Posterior vena cava (tissue), 2 donors: ENCODE measurements at regions of chr1 and their contacts with region 1.

Region 1: DNA sequence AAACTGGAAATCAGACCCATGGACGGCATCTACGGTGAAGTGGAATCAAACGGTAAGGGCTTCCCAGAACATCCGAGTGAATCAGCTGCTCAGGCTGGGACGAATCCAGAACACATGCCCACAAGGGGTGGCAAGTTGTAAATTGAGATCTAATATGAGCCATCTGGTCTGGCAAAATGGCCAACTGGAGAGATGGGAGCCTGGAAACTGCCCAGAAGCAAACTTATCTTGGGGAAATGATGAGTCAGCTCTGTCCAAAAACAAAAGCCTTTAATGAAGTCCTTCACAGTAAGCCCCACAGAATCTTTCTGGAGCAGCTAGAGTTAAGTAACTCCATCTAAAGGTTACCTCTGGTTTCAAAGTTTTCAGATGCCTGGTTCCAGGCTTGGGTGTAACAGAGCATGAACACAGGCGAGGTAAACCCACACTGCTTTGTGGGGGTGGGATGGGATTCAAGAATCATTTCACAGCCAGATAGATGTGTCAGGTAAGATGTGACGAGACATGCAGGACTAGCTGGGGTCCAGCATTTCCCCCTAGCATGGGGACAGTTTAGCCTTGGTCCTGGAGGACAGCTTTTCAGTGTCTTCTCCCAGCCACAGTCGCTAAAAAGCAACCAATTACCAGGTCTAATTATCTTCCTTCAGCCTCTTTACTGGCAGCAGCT is 10.5 kb upstream of the SRP9 start:
- DNase-seq: no peak

Region 2: DNA sequence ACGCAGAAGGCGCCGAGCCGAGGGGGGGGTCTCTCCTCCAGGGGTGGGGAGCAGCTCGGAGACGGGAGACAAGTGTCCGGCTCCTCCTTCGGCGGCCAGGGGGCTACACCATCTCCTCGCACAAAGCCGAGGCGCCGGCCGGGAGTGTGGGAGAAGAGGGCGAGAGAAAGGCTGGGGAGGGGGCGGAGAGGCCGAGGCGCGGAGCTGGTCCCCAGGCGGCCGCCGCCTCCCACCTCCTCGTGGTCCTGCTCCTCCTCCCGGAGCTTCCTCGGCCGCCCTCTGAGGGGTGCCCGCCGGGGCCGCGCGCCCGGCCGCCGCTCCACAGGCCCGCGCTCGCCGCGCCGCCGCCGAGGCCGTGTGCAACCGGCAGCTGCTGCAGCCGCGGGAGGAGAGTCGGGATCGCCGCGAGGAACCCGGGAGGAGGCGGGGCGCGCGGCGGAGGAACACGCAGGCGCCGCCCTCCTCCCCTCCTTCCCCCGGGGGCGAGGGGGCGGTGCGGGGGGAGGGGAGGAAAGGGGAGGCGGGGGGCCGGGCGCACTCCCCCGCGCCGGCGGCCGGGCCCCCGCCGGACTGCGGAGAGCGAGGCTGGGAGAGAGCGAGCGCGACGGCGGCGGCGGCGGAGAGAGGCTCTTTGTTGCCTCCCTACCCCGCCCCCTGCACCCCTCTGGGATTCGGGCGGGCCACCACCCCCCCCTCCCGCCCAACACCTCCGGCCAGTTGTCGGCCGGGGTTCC is 114.2 kb before region 1 on chr1 and contains the start of gene ENAH:
- intact Hi-C with region 1: loop called (anchors 2 to 10 kb)
- DNase-seq: peak; percentile 92
- total RNA-seq, gene ENAH: 165 to 244 TPM

Region 3: GRCh38 chr1:225720937-225721336 is 46.2 kb before region 1 on chr1:
- intact Hi-C with region 1: no loop called
- DNase-seq: no peak

Region 4: GRCh38 chr1:225746361-225747179 is 20.5 kb before region 1 on chr1:
- intact Hi-C with region 1: loop called in 1 of 2 experiments (anchors 1 kb)
- DNase-seq: peak; percentile 86